GM10248 (cell line): ENCODE measurements at regions of chr2 and their contacts with region 1.

Region 1: DNA sequence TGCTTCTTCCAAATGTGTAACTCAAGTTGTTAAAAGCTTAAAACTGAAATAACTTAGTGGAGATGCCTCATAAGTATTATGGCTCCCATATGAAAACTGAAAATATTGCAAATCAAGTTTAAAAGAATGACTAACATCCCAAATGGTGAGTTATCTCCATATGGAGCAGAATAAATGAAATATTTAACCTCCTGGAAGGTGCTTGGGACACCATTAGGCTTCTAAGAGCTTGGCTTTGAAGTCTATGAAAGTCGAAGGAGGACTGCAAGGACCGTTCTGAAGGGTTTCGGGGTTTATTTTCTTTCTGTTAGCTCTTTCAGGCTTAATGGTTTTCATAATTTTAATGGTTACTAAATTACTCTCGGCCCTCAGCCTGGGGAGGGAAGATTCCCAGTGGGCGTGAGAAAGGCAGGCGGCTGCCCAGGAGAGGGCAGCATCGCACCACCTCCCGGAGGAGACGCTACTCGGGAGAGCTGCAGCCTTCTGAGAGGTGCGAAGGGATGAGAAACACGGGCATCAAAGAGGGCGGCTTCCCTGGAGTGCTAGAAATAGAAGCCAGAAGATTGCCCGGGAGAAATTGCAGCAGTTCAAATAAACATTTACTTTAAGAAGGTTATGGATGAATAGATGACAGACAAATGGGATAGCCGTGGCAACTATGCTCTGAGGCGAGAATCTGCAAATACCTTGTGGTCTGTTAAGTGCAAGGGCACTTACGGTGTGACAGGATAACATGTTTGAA is 43.1 kb downstream of the MAP3K19 start:
- DNase-seq: peak; percentile 82
- CTCF ChIP-seq: peak; percentile 94

Region 2: GRCh38 chr2:134988994-134989605 is 15.1 kb before region 1 on chr2:
- CTCF ChIA-PET with region 1: interaction called, 64 read pairs
- POLR2A ChIA-PET with region 1: no interaction called
- DNase-seq: peak; percentile 34
- CTCF ChIP-seq: peak; percentile 49

Region 3: GRCh38 chr2:135023886-135024485 is 19.8 kb after region 1 on chr2:
- CTCF ChIA-PET with region 1: interaction called, 59 read pairs
- POLR2A ChIA-PET with region 1: no interaction called
- DNase-seq: no peak
- CTCF ChIP-seq: no peak

Region 4: GRCh38 chr2:135473567-135473966 is 469.4 kb after region 1 on chr2:
- CTCF ChIA-PET with region 1: interaction called, 12 read pairs
- POLR2A ChIA-PET with region 1: no interaction called
- DNase-seq: peak; percentile 42
- CTCF ChIP-seq: peak; percentile 46

Region 5: GRCh38 chr2:135600915-135601314 is 596.7 kb after region 1 on chr2:
- CTCF ChIA-PET with region 1: interaction called, 12 read pairs
- POLR2A ChIA-PET with region 1: no interaction called
- DNase-seq: no peak
- CTCF ChIP-seq: no peak

Region 6: DNA sequence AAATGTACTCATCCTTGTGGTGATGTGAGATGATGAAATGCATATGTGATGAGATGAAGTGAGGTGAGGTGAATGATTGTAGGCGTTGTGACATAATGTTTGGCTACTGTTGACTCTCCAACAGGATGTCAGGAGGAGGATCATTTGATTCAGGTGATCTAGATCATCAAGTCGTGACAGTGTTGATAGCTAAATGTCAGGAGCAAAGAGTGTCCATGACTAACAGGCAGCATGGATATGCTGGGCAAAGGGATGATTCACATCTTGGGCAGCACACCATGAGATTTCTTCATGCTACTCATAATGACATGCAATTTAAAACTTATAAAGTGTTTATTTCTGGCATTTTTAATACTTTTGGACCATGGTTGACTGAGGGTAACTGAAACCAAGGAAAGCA is 697.3 kb after region 1 on chr2:
- CTCF ChIA-PET with region 1: interaction called, 12 read pairs
- POLR2A ChIA-PET with region 1: no interaction called
- DNase-seq: no peak
- CTCF ChIP-seq: no peak